IMR-90 (cell line): ENCODE measurements at regions of chr13 and their contacts with region 1.

Region 1: DNA sequence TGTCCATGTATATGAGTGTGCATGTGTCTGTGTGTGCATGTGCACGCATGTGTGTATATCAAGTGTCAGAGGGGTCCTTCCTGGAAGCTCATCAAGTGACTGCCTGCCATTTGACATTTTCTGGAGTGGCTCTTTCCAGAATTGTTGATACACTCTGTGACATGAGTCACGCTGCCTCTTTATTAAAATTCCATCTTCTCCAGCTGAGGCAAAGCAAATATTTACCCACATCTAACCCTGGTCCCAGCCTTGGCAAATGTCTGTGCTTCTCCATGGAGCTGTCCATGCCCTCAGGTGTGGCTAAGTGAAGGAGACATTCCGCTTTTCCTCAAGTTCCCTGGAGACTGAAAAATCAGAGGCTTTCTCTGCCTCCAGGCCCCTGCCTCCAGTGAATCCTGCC is 88.2 kb upstream of the MBNL2 start:
- DNase-seq: no peak
- ATAC-seq: peak; percentile 37; the same call in 1 of the 2 replicates
- H3K4me3 ChIP-seq: no peak overlapping the region
- H3K27ac ChIP-seq: no peak overlapping the region
- H3K4me1 ChIP-seq: no peaks in the 10 kb centered on the region; the same call in 1 of the 2 replicates
- H3K27me3 ChIP-seq: no peaks in the 10 kb centered on the region
- CTCF ChIP-seq: no peak
- POLR2A ChIP-seq: no peak
- RAD21 ChIP-seq: no peak

Region 2: DNA sequence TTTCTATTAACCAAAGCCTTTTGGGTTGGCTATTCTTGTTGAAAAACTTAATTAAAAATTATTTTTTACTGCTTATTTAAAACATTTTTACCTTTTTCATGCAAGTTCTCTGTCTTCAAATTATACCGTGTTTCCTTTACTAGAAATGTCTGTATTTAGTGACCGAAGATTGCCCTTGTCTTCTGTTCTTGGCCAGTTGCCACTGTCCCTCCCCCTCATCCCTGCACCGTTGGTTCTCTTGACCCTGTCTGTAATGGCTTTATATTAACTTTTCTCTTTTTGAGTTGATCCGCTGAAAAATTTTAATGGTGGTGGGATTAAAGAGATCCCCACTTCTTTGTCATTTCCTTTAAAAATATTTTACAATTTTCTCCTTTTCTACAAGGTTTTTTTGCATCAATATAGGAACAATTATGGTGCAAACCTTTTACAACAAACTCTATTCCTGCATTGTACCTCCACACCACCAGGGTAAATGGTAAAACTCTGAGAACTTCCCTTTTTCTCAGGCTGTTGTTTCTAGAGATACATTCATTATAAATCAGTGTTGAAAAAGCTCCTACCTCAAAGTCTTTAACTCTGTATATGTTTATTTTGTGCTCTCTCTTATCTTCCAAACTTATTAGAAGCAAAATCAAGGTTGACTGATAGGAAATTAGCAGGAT is 1056.0 kb after region 1 on chr13:
- CTCF ChIA-PET with region 1: no interaction called
- POLR2A ChIA-PET with region 1: no interaction called
- dilution Hi-C with region 1: no loop called
- in situ Hi-C with region 1: no loop called
- intact Hi-C with region 1: loop called (anchors 10 kb)
- DNase-seq: no peak
- ATAC-seq: no peak
- H3K4me3 ChIP-seq: no peak overlapping the region
- H3K27ac ChIP-seq: no peak overlapping the region; the same call in 1 of the 2 replicates
- H3K4me1 ChIP-seq: peaks cover 28% of the 10 kb centered on the region
- H3K27me3 ChIP-seq: no peaks in the 10 kb centered on the region
- CTCF ChIP-seq: no peak
- POLR2A ChIP-seq: no peak
- RAD21 ChIP-seq: no peak